Heart left ventricle (tissue), 16 donors: ENCODE measurements at regions of chr3 and their contacts with region 1.

Region 1: DNA sequence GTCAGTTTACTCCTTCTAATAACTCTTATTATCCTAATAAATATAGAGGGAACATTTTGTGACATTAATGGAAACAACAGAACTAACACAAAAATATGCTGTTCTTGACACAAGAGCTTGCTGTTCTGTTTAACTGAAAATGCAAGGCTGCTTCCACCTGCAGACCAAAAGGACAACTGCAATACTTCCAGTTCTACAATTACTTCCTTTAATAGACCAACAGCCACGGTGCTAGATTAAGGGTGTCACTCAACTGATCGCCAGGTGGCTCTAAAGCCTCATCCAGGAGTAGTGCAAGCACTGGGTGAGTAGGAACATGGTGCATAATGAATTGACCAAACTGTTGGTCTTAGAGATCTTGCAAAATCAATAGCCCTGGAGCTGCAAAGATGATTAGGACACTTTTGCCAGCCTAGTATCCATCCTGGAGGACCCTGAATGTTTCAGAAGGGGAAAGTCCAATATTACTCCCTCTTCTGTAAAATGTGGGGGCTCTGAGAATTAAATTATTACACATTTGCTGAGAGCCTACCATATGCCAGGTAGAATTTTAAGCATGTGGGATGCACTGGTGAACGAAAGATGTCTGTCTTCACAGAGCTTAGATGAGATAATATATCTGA is 3.6 kb upstream of the CLDN16 start:
- DNase-seq: peak in 4 of 5 donors; percentile 13 to 28 (median 25)
- ATAC-seq: peak in 3 of 4 donors; percentile 81 to 90 (median 89)
- H3K4me3 ChIP-seq: no peak overlapping the region
- H3K27ac ChIP-seq: no peak overlapping the region
- H3K4me1 ChIP-seq: no peaks in the 10 kb centered on the region
- H3K27me3 ChIP-seq: no peaks in the 10 kb centered on the region
- CTCF ChIP-seq: peak; percentile 29 to 66 (median 51)
- POLR2A ChIP-seq: no peak

Region 2: GRCh38 chr3:190108804-190109203 is 275.5 kb before region 1 on chr3:
- intact Hi-C with region 1: no loop called
- DNase-seq: no peak
- ATAC-seq: no peak
- H3K4me3 ChIP-seq: no peak overlapping the region
- H3K27ac ChIP-seq: peak overlapping the region in 2 of 12 donors; percentile 31 to 43
- H3K4me1 ChIP-seq: peaks cover 0 to 8% (median 0%) of the 10 kb centered on the region in 12 donors
- H3K27me3 ChIP-seq: peaks cover 0 to 2% (median 0%) of the 10 kb centered on the region in 9 donors
- CTCF ChIP-seq: no peak
- POLR2A ChIP-seq: no peak

Region 3: GRCh38 chr3:190321789-190322603 is 62.4 kb before region 1 on chr3 and contains the start of gene CLDN1:
- intact Hi-C with region 1: loop called in 2 of 10 experiments (anchors 5 kb)
- DNase-seq: peak; percentile 76 to 89 (median 79)
- ATAC-seq: peak; percentile 72 to 96 (median 92)
- H3K4me3 ChIP-seq: peak within 1 kb of the TSS; percentile 30 to 72 (median 60)
- H3K27ac ChIP-seq: no peak within 1 kb of the TSS
- H3K4me1 ChIP-seq: peaks cover 0 to 18% (median 13%) of the 10 kb centered on the region in 12 donors
- H3K27me3 ChIP-seq: peaks cover 0 to 25% (median 0%) of the 10 kb centered on the region in 9 donors
- CTCF ChIP-seq: peak; percentile 93 to 99 (median 96)
- POLR2A ChIP-seq: no peak
- total RNA-seq, gene CLDN1: 0.13 to 45.0 (median 0.31) TPM in 6 of 9 donors, not detected in the others